ENCODE measurements at regions of chr7 and their contacts with region 1.

Region 1: DNA sequence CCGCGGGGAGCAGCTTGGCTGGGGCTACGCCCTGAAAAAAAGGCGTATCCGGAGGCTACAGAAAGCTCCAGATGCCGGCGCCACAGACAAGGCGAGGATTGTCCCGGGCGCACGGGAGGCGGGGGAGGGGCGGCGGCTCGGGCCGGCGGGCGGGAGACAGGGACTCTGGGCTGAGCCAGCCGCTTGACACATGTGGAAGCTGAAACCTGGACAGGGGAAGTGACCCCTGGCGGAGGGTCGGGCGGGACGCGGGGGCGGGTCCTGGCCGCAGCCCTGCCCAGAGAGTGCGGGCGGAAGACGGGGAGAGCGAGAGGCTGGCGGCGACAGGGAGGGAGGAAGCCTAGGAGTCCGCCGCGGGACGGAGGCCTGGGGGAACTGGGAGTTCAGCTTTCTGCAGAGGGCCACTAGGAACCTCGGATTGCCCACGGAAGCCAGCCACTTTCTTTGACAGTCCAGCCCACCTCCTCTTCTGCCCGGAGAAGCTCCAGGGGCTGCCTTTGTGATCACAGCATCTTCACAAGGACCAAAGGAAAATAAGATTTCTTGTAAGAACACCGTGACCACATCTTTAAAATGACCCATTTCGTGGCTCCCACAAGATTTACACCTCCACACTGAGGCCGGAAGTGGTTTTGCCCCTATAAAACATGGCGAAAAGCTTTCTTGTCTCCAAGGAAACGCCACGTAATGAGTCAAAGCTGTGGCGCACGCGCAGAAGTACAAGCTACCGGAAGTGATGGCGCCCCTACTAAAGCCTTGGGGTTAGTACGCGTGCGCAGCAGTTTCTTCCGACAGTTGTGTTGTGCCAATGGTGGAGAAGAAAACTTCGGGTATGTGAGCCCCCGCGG is at the starts of genes PLOD3 and ZNHIT1:
- DNase-seq: peak; percentile 90 to 99 (median 96)
- ATAC-seq: peak; percentile 81
- H3K4me3 ChIP-seq: peak within 1 kb of the TSS; percentile 83
- H3K4me3 Mint-ChIP-seq: peak within 1 kb of the TSS; percentile 95
- H3K27ac ChIP-seq: peak within 1 kb of the TSS; percentile 69 to 90
- H3K27ac Mint-ChIP-seq: peak within 1 kb of the TSS; percentile 87
- H3K4me1 ChIP-seq: peaks cover 47% of the 10 kb centered on the region
- H3K4me1 Mint-ChIP-seq: peaks cover 38% of the 10 kb centered on the region
- H3K27me3 ChIP-seq: no peaks in the 10 kb centered on the region
- H3K27me3 Mint-ChIP-seq: no peaks in the 10 kb centered on the region
- CTCF ChIP-seq: no peak
- total RNA-seq, gene PLOD3: 13.8 to 15.9 TPM
- total RNA-seq, gene ZNHIT1: 28.4 to 30.6 TPM

Region 2: DNA sequence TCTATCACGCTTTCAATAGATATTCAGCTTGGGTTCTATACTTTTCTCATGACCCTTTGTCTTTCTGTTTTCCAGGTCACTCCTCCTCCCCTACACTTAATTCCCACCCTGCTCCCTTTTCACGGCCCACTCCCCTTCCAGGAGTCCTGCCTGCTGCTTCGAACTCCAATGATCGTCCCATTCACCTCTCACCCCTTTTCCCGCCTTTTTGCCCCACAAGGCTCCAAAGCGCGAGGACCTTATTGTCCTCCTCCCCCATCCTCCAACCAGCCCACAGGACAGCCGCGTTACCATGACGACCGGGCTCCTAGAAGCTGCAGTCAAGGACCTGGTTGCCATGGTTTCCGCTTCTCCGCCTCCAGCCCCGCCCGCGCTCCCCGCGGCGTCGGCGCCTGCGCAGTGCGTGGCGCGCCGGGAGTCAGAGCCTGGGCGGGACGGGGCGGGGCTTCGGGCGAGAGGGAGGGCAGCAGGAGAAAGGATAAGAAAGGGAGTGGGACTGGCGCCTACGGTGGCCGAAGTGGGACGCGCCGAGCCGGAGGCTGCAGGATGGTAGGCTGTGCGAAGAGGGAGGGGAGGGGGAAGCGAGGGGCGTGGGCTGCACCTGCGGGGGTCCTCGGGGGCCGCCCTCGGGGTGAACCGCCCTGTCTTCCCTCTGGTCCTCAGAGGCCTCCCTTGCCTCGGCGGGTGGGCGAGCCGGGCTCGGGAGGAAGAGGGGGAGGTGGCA is 63.5 kb before region 1 on chr7 and contains the start of gene AP1S1:
- CTCF ChIA-PET with region 1: no interaction called
- POLR2A ChIA-PET with region 1: interaction called, 3 read pairs
- intact Hi-C with region 1: loop called in 1 of 2 experiments (anchors 2 kb)
- DNase-seq: peak; percentile 83 to 98 (median 89)
- ATAC-seq: peak; percentile 88
- H3K4me3 ChIP-seq: peak within 1 kb of the TSS; percentile 69
- H3K4me3 Mint-ChIP-seq: peak within 1 kb of the TSS; percentile 89
- H3K27ac ChIP-seq: no peak within 1 kb of the TSS
- H3K27ac Mint-ChIP-seq: peak within 1 kb of the TSS; percentile 72
- H3K4me1 ChIP-seq: peaks cover 19% of the 10 kb centered on the region
- H3K4me1 Mint-ChIP-seq: peaks cover 15% of the 10 kb centered on the region
- H3K27me3 ChIP-seq: no peaks in the 10 kb centered on the region
- H3K27me3 Mint-ChIP-seq: peaks cover 15% of the 10 kb centered on the region
- CTCF ChIP-seq: no peak
- total RNA-seq, gene AP1S1: 3.0 to 3.9 TPM

Region 3: DNA sequence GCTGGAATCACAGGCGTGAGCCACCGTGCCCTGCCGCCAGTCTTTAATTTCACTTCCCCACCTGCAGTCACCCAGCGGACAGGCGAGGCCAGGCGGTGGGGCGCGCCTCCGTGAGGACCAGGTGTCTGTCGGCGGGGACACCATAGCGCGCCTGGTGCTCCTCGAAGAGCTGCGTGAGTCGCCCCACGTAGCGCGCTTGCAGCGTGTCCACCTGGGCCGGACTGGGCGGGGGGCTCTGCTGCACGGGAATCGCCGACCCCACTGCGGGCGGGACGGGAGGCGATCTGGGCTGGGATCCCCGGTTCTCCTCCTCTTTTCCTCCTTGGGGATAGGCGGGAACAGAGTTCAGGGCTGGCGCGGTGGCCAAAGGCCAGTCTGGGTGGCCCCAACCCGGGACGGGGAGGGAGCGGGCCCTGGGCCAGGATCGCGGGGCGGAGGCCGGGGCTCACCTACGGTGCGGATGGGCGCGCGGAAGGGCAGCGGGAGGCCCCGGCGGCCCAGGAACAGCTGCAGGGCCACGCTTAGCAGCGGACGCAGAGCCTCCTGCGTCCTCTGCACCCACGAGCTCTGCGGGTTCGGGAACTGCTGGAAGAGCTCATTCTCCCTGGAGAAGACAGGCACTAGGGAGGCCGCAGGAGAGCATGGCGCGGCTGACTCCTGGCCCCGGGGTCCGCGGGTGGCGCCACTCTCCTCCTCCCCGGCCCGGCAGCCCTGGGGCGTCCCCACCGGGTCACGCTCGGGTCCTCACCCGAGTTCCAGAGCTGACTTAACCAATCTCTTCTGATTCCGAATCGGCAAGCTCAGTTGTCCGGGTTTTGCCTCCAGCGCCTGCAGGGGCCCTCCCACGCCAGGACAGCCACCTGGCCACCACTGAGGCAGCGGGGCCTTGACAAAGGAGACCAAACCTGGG is 15.7 kb before region 1 on chr7:
- CTCF ChIA-PET with region 1: no interaction called
- POLR2A ChIA-PET with region 1: interaction called, 11 read pairs
- intact Hi-C with region 1: no loop called
- DNase-seq: peak in 1 of 14 experiments; percentile 25
- ATAC-seq: no peak
- H3K4me3 ChIP-seq: no peak overlapping the region
- H3K4me3 Mint-ChIP-seq: no peak overlapping the region
- H3K27ac ChIP-seq: no peak overlapping the region
- H3K27ac Mint-ChIP-seq: no peak overlapping the region
- H3K4me1 ChIP-seq: peaks cover 37% of the 10 kb centered on the region
- H3K4me1 Mint-ChIP-seq: peaks cover 15% of the 10 kb centered on the region
- H3K27me3 ChIP-seq: peaks cover 18 to 24% of the 10 kb centered on the region in 2 experiments
- H3K27me3 Mint-ChIP-seq: peaks cover 40% of the 10 kb centered on the region
- CTCF ChIP-seq: no peak

Region 4: DNA sequence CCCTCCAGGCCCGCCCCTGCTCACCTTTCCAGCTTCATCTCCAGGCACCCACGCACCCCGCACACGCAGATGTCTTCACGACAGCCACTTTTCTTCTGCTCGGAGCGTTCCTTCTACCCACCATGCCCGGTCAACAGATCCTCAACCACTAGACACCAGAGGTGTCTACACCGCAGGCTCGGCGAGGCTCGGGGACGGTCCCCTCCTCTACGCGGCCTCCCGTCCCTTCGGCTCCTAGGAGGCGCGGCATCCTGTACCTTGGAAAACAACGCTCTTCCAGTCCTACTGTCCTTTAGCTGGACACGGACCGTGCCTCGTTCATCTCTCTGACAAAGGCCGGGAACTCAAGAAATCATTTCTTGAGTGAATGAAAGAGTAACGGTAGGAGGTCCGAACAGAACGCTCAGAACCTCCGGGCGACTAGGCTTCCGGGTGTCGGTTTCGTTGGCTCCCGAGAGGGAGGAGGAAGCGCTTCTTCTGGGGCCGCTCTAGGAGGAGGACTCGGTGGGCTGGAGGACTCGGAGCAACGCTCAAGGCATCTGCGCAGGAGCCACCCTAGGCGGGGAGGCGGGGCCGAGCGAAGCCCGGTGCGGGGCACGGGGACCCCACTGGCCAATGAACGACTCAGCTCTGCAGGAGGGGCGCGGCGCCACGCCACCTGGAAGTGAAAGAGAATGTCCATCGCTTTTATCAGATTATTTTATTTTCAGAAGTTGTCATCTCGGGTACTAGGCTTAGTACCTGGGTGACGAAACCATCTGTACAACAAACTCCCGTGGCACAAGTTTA is 34.5 kb after region 1 on chr7:
- CTCF ChIA-PET with region 1: interaction called, 3 read pairs
- POLR2A ChIA-PET with region 1: interaction called, 30 read pairs
- intact Hi-C with region 1: loop called in 1 of 2 experiments (anchors 2 kb)
- DNase-seq: peak; percentile 96 to 100 (median 98)
- ATAC-seq: peak; percentile 97
- H3K4me3 ChIP-seq: peak overlapping the region; percentile 95
- H3K4me3 Mint-ChIP-seq: peak overlapping the region; percentile 98
- H3K27ac ChIP-seq: peak overlapping the region; percentile 75 to 76
- H3K27ac Mint-ChIP-seq: peak overlapping the region; percentile 88
- H3K4me1 ChIP-seq: peaks cover 23% of the 10 kb centered on the region
- H3K4me1 Mint-ChIP-seq: peaks cover 38% of the 10 kb centered on the region
- H3K27me3 ChIP-seq: no peaks in the 10 kb centered on the region
- H3K27me3 Mint-ChIP-seq: peaks cover 5% of the 10 kb centered on the region
- CTCF ChIP-seq: no peak

Region 5: DNA sequence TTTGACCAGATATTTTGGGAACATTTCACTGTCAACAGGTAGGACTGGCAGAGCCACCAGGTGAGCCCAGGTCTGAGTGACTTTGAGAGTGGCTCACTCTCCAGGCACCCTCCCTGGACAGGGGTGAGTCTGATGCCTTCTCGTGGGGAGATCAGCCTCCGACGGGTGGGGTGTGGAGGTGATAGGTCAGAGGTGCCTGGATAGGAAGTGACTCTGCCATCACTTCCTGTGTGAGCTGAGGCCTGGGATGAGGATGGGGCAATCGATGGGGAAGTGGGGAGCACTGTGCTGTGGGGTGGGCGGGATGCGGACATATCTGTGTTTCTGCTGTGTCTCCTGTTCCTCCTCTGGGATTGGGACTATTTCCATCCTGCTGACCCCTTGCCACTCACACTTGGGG is 69.4 kb after region 1 on chr7:
- CTCF ChIA-PET with region 1: interaction called, 3 read pairs
- POLR2A ChIA-PET with region 1: interaction called, 4 read pairs
- intact Hi-C with region 1: loop called in 1 of 2 experiments (anchors 2 kb)
- DNase-seq: peak in 1 of 14 experiments; percentile 26
- ATAC-seq: no peak
- H3K4me3 ChIP-seq: no peak overlapping the region
- H3K4me3 Mint-ChIP-seq: no peak overlapping the region
- H3K27ac ChIP-seq: no peak overlapping the region
- H3K27ac Mint-ChIP-seq: no peak overlapping the region
- H3K4me1 ChIP-seq: peaks cover 13% of the 10 kb centered on the region
- H3K4me1 Mint-ChIP-seq: peaks cover 8% of the 10 kb centered on the region
- H3K27me3 ChIP-seq: peaks cover 4 to 6% of the 10 kb centered on the region in 2 experiments
- H3K27me3 Mint-ChIP-seq: peaks cover 26% of the 10 kb centered on the region
- CTCF ChIP-seq: no peak